Activated CD8-positive, alpha-beta T cell treated with anti-CD3 and anti-CD28 coated beads, Interleukin-2, amount 10 ng/mL, durations not matched to agents 7 days and 5 days (primary cell): ENCODE measurements at regions of chr2 and their contacts with region 1.

Region 1: DNA sequence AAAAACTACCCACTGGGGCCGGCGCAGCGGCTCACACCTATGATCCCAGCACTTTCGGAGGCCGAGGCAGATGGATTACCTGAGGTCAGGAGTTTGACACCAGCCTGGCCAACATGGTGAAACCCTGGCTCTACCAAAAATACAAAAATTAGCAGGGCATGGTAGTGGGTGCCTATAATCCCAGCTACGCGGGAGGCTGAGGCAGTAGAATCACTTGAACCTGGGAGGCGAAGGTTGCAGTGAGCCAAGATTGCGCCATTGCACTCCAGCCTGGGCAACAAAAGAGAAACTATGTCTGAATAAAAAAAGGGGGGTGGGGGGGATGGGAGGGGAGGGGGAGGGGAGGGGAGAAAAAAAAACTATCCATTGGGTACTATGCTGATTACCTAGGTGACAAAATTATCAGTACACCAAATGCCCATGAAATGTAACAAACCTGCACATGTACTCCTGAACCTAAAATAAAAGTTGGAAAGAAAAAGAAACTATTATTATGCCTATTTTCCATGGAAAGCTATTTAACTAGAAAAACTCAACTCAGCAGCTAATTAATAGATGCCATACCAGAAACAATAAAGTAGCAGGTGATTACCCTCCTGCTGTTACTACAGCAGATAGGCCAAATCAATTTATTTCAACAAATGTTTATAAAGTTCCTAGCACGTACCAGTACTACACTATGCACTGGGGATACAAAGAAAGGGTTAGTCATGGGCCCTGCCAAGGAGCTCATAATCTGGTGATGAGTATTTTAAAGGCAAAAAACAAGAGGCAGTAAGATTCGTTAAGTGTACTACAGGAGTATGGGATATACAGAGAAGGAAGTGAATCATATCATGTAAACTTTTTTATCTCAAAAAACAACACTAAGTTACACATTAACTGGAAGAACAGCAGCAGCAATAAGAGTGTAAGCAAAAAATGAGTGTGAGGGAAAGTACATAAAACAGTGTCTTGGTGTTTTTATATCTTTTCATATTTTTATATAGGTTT is 112.8 kb upstream of the SLC39A10 start:
- DNase-seq: no peak
- ATAC-seq: no peak
- H3K4me3 Mint-ChIP-seq: no peak overlapping the region
- H3K27ac Mint-ChIP-seq: peak overlapping the region; percentile 88
- H3K4me1 Mint-ChIP-seq: peaks cover 71% of the 10 kb centered on the region
- H3K27me3 Mint-ChIP-seq: no peaks in the 10 kb centered on the region

Region 2: GRCh38 chr2:195559431-195559914 is 15.3 kb after region 1 on chr2:
- CTCF ChIA-PET with region 1: interaction called, 115 read pairs
- POLR2A ChIA-PET with region 1: interaction called, 198 read pairs
- DNase-seq: peak; percentile 95
- ATAC-seq: peak; percentile 94
- H3K4me3 Mint-ChIP-seq: peak overlapping the region; percentile 52
- H3K27ac Mint-ChIP-seq: peak overlapping the region; percentile 98
- H3K4me1 Mint-ChIP-seq: peaks cover 72% of the 10 kb centered on the region
- H3K27me3 Mint-ChIP-seq: no peaks in the 10 kb centered on the region